ENCODE measurements at regions of chr13 and their contacts with region 1.

Region 1: GRCh38 chr13:78121459-78122348 is 203.1 kb upstream of the EDNRB start:
- DNase-seq: peak in 3 of 5 donors; percentile 33 to 85 (median 74)
- H3K4me3 ChIP-seq: peak overlapping the region in 1 of 3 donors; percentile 27
- H3K27ac ChIP-seq: no peak overlapping the region
- H3K4me1 ChIP-seq: no peaks in the 10 kb centered on the region
- H3K27me3 ChIP-seq: no peaks in the 10 kb centered on the region
- CTCF ChIP-seq: peak; percentile 81

Region 2: GRCh38 chr13:77779552-77780272 is 342.0 kb before region 1 on chr13:
- intact Hi-C with region 1: loop called (anchors 5 kb)
- DNase-seq: peak in 3 of 5 donors; percentile 31 to 88 (median 78)
- H3K4me3 ChIP-seq: no peak overlapping the region
- H3K27ac ChIP-seq: no peak overlapping the region
- H3K4me1 ChIP-seq: peaks cover 0 to 2% (median 0%) of the 10 kb centered on the region in 3 donors
- H3K27me3 ChIP-seq: no peaks in the 10 kb centered on the region
- CTCF ChIP-seq: peak; percentile 38

Region 3: GRCh38 chr13:78045916-78046315 is 75.8 kb before region 1 on chr13:
- intact Hi-C with region 1: no loop called
- DNase-seq: no peak
- H3K4me3 ChIP-seq: no peak overlapping the region
- H3K27ac ChIP-seq: no peak overlapping the region
- H3K4me1 ChIP-seq: no peaks in the 10 kb centered on the region
- H3K27me3 ChIP-seq: no peaks in the 10 kb centered on the region
- CTCF ChIP-seq: no peak

Measured in kidney (tissue), 22 donors.